ENCODE measurements at regions of chr7 and their contacts with region 1.

Region 1: GRCh38 chr7:119175911-119176627 is 951.6 kb downstream of the ANKRD7 start:
- DNase-seq: peak in 3 of 4 experiments; percentile 19 to 77 (median 21)
- ATAC-seq: no peak; the same call in 2 of the 3 replicates
- H3K4me3 ChIP-seq: no peak overlapping the region
- H3K27ac ChIP-seq: no peak overlapping the region
- H3K4me1 ChIP-seq: no peaks in the 10 kb centered on the region
- H3K27me3 ChIP-seq: no peaks in the 10 kb centered on the region
- CTCF ChIP-seq: peak; percentile 37 to 74 (median 54); a peak in 5 of 6 replicates
- EP300 ChIP-seq: no peak
- POLR2A ChIP-seq: no peak
- RAD21 ChIP-seq: peak; percentile 55 to 80

Region 2: DNA sequence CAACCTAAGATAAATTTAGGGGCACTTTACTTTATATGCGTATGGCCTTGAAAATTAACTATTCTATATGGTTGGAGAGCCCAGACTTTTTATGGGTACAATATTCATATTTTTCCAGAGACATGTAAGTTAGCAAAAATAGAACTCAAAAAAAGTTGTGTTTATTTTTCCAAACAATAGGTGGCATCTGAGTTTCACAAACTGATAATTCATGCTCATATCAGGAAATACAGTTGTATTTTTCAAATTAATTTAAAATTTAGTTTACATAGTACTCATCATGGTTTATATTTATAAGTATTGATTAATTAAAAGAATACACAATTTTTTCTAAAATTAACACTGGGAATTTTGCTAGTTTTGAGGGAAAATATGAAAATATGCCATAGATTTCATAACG is 917.0 kb before region 1 on chr7:
- CTCF ChIA-PET with region 1: no interaction called
- POLR2A ChIA-PET with region 1: no interaction called
- in situ Hi-C with region 1: no loop called
- intact Hi-C with region 1: loop called (anchors 5 kb)
- DNase-seq: no peak
- ATAC-seq: no peak
- H3K4me3 ChIP-seq: no peak overlapping the region
- H3K27ac ChIP-seq: no peak overlapping the region
- H3K4me1 ChIP-seq: no peaks in the 10 kb centered on the region
- H3K27me3 ChIP-seq: no peaks in the 10 kb centered on the region
- CTCF ChIP-seq: peak in 1 of 3 experiments; percentile 35; a peak in 2 of 6 replicates
- EP300 ChIP-seq: no peak
- POLR2A ChIP-seq: no peak
- RAD21 ChIP-seq: peak; percentile 69 to 84

Region 3: GRCh38 chr7:118793582-118793981 is 382.5 kb before region 1 on chr7:
- CTCF ChIA-PET with region 1: no interaction called
- POLR2A ChIA-PET with region 1: no interaction called
- in situ Hi-C with region 1: no loop called
- intact Hi-C with region 1: no loop called
- DNase-seq: no peak
- ATAC-seq: no peak
- H3K4me3 ChIP-seq: no peak overlapping the region
- H3K27ac ChIP-seq: no peak overlapping the region
- H3K4me1 ChIP-seq: no peaks in the 10 kb centered on the region
- H3K27me3 ChIP-seq: no peaks in the 10 kb centered on the region
- CTCF ChIP-seq: no peak
- EP300 ChIP-seq: no peak
- POLR2A ChIP-seq: no peak
- RAD21 ChIP-seq: no peak

Region 4: GRCh38 chr7:118918556-118918955 is 257.5 kb before region 1 on chr7:
- CTCF ChIA-PET with region 1: no interaction called
- POLR2A ChIA-PET with region 1: no interaction called
- in situ Hi-C with region 1: no loop called
- intact Hi-C with region 1: loop called (anchors 5 kb)
- DNase-seq: peak in 1 of 4 experiments; percentile 11
- ATAC-seq: no peak; the same call in 2 of the 3 replicates
- H3K4me3 ChIP-seq: no peak overlapping the region
- H3K27ac ChIP-seq: no peak overlapping the region
- H3K4me1 ChIP-seq: no peaks in the 10 kb centered on the region
- H3K27me3 ChIP-seq: no peaks in the 10 kb centered on the region
- CTCF ChIP-seq: peak in 2 of 3 experiments; percentile 14 to 34; a peak in 2 of 6 replicates
- EP300 ChIP-seq: no peak
- POLR2A ChIP-seq: no peak
- RAD21 ChIP-seq: peak; percentile 38 to 77

Measured in K562 (cell line).